MCF 10A (cell line): ENCODE measurements at regions of chr17 and their contacts with region 1.

Region 1: DNA sequence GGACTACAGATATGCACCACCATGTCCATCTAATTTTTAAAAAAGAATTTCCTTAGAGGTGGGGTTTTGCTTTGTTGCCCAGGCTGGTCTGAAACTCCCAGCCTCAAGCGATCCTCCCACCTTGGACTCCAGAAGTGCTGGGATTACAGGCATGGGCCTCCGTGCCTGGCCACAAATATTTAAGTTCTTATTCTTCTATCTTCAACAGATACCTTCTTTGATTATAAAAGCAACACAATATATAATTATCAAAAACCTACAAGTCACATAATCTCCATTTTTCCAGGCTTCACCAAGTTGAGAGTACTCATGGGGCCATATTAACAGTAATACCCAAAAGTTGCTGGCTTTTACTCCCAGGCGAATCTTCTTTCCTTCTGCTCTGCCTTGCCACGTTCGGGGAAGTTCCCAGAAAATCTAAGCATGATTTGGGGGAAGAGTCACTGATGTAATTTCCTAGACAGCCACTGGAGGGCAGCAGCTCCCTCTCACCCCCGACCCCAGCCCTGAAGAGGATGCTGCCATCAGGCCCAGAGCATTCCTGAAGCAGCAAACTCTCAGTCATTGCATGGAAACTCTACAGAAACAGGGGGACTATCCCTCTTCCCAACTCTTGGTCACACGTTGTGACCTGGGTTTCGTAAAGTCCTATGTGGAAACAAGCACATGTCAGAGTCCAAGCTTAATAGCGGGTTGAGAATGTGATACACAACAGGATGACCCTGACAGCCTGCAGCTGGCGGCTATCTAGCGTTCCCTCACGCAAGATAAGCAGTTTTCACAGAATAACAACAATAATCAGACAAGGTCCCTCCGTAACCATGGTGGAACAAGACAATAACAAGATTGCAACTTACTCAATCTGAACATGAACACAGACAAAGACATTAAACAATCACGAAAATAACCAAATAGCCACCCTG is 43.9 kb upstream of the DHX40 start:
- DNase-seq: peak; percentile 67
- H3K4me3 Mint-ChIP-seq: no peak overlapping the region
- H3K27ac Mint-ChIP-seq: peak overlapping the region; percentile 50
- H3K4me1 Mint-ChIP-seq: peaks cover 12% of the 10 kb centered on the region
- H3K27me3 Mint-ChIP-seq: no peaks in the 10 kb centered on the region
- CTCF ChIP-seq: peak; percentile 85

Region 2: GRCh38 chr17:59451706-59452105 is 69.8 kb before region 1 on chr17:
- CTCF ChIA-PET with region 1: interaction called, 10 read pairs
- POLR2A ChIA-PET with region 1: no interaction called
- intact Hi-C with region 1: no loop called
- DNase-seq: peak; percentile 58
- H3K4me3 Mint-ChIP-seq: no peak overlapping the region
- H3K27ac Mint-ChIP-seq: peak overlapping the region; percentile 47
- H3K4me1 Mint-ChIP-seq: peaks cover 6% of the 10 kb centered on the region
- H3K27me3 Mint-ChIP-seq: no peaks in the 10 kb centered on the region
- CTCF ChIP-seq: no peak

Region 3: DNA sequence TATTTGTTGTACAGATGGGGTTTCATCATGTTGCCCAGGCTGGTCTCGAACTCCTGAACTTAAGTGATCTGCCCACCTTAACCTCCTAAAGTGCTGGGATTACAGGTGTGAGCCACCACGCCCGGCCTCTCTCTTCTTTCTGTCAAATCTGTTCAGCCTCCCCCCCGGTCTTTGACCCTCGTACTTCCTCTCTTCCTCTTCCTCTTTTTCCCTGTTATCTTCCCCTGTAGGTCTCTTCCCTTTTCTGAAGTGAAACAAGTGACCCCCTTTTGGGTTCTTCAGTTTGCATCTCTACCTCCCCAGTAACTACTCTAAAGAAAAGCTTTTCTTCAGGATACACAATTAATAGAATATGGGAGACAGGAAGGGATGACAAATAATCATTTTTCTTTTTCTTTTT is 12.3 kb after region 1 on chr17:
- CTCF ChIA-PET with region 1: interaction called, 11 read pairs
- POLR2A ChIA-PET with region 1: no interaction called
- intact Hi-C with region 1: no loop called
- DNase-seq: no peak
- H3K4me3 Mint-ChIP-seq: no peak overlapping the region
- H3K27ac Mint-ChIP-seq: peak overlapping the region; percentile 25
- H3K4me1 Mint-ChIP-seq: no peaks in the 10 kb centered on the region
- H3K27me3 Mint-ChIP-seq: peaks cover 22% of the 10 kb centered on the region
- CTCF ChIP-seq: no peak

Region 4: GRCh38 chr17:59558977-59559376 is 37.5 kb after region 1 on chr17:
- CTCF ChIA-PET with region 1: interaction called, 20 read pairs
- POLR2A ChIA-PET with region 1: interaction called, 3 read pairs
- intact Hi-C with region 1: no loop called
- DNase-seq: no peak
- H3K4me3 Mint-ChIP-seq: no peak overlapping the region
- H3K27ac Mint-ChIP-seq: no peak overlapping the region
- H3K4me1 Mint-ChIP-seq: no peaks in the 10 kb centered on the region
- H3K27me3 Mint-ChIP-seq: peaks cover 11% of the 10 kb centered on the region
- CTCF ChIP-seq: peak; percentile 15

Region 5: GRCh38 chr17:59846394-59847165 is 325.1 kb after region 1 on chr17:
- CTCF ChIA-PET with region 1: no interaction called
- POLR2A ChIA-PET with region 1: no interaction called
- intact Hi-C with region 1: no loop called
- DNase-seq: peak; percentile 91
- H3K4me3 Mint-ChIP-seq: peak overlapping the region; percentile 50
- H3K27ac Mint-ChIP-seq: peak overlapping the region; percentile 98
- H3K4me1 Mint-ChIP-seq: peaks cover 26% of the 10 kb centered on the region
- H3K27me3 Mint-ChIP-seq: no peaks in the 10 kb centered on the region
- CTCF ChIP-seq: no peak

Region 6: GRCh38 chr17:59859444-59860025 is 338.1 kb after region 1 on chr17:
- CTCF ChIA-PET with region 1: no interaction called
- POLR2A ChIA-PET with region 1: no interaction called
- intact Hi-C with region 1: loop called (anchors 2 kb)
- DNase-seq: peak; percentile 44
- H3K4me3 Mint-ChIP-seq: no peak overlapping the region
- H3K27ac Mint-ChIP-seq: no peak overlapping the region
- H3K4me1 Mint-ChIP-seq: peaks cover 5% of the 10 kb centered on the region
- H3K27me3 Mint-ChIP-seq: no peaks in the 10 kb centered on the region
- CTCF ChIP-seq: peak; percentile 56